H1 (cell line): ENCODE measurements at regions of chr19 and their contacts with region 1.

Region 1: GRCh38 chr19:33541834-33542472 is 20.4 kb upstream of the PEPD start:
- DNase-seq: no peak
- H3K4me3 ChIP-seq: no peak overlapping the region
- H3K27ac ChIP-seq: no peak overlapping the region
- H3K4me1 ChIP-seq: no peaks in the 10 kb centered on the region; a peak in 1 of 7 replicates
- H3K27me3 ChIP-seq: no peaks in the 10 kb centered on the region
- CTCF ChIP-seq: no peak
- EP300 ChIP-seq: no peak
- POLR2A ChIP-seq: no peak
- RAD21 ChIP-seq: no peak

Region 2: GRCh38 chr19:33496038-33496895 is 45.7 kb before region 1 on chr19:
- CTCF ChIA-PET with region 1: no interaction called
- POLR2A ChIA-PET with region 1: no interaction called
- DNase-seq: no peak
- H3K4me3 ChIP-seq: no peak overlapping the region
- H3K27ac ChIP-seq: no peak overlapping the region
- H3K4me1 ChIP-seq: no peaks in the 10 kb centered on the region; a peak in 1 of 7 replicates
- H3K27me3 ChIP-seq: no peaks in the 10 kb centered on the region
- CTCF ChIP-seq: no peak
- EP300 ChIP-seq: no peak
- POLR2A ChIP-seq: no peak
- RAD21 ChIP-seq: no peak

Region 3: DNA sequence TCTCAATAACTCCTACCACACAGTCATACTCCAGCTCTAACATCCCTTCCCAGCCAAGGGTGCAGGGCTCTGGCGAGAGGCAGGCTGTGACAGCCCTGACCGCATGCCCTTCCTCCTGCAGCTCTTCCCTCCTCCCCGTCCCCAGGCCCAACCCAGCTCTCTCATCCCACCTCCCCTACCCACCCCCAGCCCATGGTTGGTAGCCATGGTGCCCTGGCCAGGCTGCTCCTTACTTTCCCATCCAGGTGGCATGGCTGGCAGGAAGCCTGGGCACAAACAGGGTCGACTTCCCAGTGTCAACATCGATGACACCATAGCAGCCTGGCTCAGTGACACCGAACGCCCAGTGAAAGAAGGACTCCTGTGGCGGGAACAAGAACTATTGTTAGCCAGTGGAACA is 31.2 kb before region 1 on chr19:
- CTCF ChIA-PET with region 1: interaction called, 16 read pairs
- POLR2A ChIA-PET with region 1: no interaction called
- DNase-seq: no peak
- H3K4me3 ChIP-seq: no peak overlapping the region
- H3K27ac ChIP-seq: peak overlapping the region; percentile 49; the same call in 1 of the 2 replicates
- H3K4me1 ChIP-seq: peaks cover 0 to 15% (median 7%) of the 10 kb centered on the region in 4 experiments; a peak in 6 of 7 replicates
- H3K27me3 ChIP-seq: no peaks in the 10 kb centered on the region; a peak in 1 of 7 replicates
- CTCF ChIP-seq: no peak
- EP300 ChIP-seq: no peak
- POLR2A ChIP-seq: no peak
- RAD21 ChIP-seq: no peak

Region 4: DNA sequence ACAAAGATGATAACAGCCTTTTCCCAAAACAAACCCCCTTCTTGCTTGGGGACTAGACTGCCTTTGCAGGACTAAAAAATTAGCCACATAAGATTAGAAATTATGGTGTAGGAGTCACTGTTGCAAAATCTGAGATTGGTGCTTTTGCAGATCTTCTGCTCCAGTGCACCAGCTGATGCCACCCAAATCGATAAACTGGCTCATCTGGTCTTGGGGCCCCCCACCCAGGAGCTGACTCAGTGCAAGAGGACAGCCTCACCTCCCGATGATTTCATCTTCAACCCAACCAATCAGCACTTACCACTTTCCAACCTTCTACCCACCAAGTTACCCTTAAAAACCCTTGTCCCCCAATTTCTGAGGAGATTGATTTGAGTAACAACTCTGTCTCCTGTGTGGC is 26.8 kb after region 1 on chr19:
- CTCF ChIA-PET with region 1: no interaction called
- POLR2A ChIA-PET with region 1: no interaction called
- DNase-seq: no peak
- H3K4me3 ChIP-seq: no peak overlapping the region
- H3K27ac ChIP-seq: no peak overlapping the region
- H3K4me1 ChIP-seq: peaks cover 1 to 13% (median 10%) of the 10 kb centered on the region in 4 experiments; a peak in 6 of 7 replicates
- H3K27me3 ChIP-seq: no peaks in the 10 kb centered on the region
- CTCF ChIP-seq: no peak
- EP300 ChIP-seq: no peak
- POLR2A ChIP-seq: no peak
- RAD21 ChIP-seq: no peak

Region 5: GRCh38 chr19:33606556-33606955 is 64.6 kb after region 1 on chr19:
- CTCF ChIA-PET with region 1: no interaction called
- POLR2A ChIA-PET with region 1: no interaction called
- DNase-seq: no peak
- H3K4me3 ChIP-seq: no peak overlapping the region
- H3K27ac ChIP-seq: no peak overlapping the region
- H3K4me1 ChIP-seq: peaks cover 1 to 4% (median 3%) of the 10 kb centered on the region in 4 experiments; a peak in 5 of 7 replicates
- H3K27me3 ChIP-seq: no peaks in the 10 kb centered on the region
- CTCF ChIP-seq: no peak
- EP300 ChIP-seq: no peak
- POLR2A ChIP-seq: no peak
- RAD21 ChIP-seq: no peak